Astrocyte of the cerebellum (primary cell): ENCODE measurements at regions of chr20 and their contacts with region 1.

Region 1: DNA sequence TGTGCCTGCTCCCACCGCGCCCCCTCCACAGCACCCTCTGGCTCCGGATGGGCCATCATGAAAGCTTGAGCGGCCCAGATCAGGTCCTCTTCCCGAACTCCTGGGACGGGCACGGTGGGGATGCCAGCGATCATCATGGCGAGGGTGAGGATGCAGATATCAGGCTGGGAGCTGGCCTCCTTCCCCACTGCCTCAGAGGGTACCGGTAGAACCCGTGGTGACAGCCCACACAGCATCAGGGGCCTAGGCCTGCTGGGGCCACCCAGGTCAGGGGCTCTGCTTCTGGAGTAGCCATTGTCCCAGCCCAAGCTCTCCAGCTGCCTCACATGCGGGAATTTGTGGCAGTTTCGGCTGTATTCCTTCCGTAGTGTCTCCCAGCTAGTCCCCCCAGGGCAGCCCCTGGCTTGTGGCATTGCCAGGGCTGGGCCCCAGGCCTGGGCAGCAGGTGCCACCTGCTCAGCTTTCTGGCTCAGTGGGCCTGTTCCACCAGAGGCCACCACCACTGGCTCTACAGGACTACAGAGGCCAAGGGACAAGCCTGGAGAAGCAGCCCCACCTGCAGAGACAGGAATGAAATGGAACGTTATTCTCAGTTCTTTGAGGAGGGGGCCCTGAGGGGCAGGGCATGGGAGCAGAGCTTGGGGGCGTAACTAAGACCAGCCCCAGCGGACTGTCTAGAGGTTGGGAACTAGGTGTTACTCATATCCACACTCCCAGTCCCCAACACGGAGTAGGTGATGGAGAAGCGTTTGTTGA is 654 bp downstream of the SPATA25 start:
- DNase-seq: no peak
- H3K4me3 ChIP-seq: no peak overlapping the region
- CTCF ChIP-seq: no peak

Region 2: GRCh38 chr20:45685896-45686295 is 200.9 kb before region 1 on chr20:
- in situ Hi-C with region 1: no loop called
- DNase-seq: no peak
- H3K4me3 ChIP-seq: no peak overlapping the region
- CTCF ChIP-seq: no peak

Region 3: DNA sequence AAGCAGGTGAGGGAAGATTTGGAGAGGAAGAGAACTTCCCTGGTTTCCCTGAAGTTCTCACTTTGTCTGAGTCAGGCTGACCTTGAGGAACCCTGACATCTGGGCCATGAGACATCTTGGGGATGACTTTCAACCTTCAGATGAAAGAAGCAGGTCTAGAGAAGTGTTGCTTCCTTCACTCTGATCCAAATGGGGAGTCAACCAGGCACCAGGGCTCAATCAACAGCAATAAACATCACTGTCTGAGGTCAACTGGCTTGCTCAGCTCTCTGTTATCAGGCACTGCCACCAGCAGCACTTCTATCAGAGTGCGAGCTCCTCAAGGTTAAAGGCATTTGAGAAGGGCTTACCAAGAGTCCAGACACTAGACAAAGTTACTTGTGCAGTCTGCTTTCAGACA is 35.8 kb before region 1 on chr20:
- in situ Hi-C with region 1: no loop called
- DNase-seq: no peak
- H3K4me3 ChIP-seq: no peak overlapping the region
- CTCF ChIP-seq: no peak

Region 4: DNA sequence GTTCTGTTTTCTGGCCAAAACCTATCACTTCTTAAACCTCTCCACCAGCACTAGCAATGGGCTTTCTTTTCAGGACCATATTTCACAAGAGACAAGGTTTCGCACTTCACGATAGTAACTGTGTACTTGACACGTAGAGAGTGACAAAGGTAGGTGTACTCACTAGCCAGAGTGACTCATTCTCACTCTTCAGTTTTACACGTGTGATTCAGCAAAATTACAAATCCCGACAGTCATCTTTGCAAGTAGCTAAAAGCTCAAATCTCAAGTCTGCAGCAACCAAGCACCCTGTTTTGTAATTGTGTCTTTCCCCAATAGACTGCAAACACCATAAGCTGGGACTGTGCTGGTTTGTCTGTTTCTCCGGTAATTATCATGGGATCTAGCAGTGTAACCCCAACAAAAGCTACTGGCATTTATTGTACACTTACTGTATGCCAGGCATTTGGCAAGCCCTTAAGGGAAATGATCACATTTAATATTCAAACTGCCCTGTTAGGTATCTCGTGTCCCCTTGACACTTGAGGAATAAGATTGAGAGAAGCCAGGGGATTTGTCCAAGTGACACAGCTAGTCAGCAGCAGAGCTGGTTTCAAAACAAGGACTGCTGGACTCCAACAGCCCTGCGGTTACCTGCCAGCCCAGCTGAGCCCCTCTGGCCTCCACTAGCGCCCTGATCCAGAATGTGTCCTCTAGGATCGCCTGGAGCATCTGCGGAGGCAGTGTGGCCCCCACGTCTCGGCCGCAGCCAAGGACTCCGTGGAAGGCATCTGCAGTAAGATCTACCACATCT is 57.6 kb after region 1 on chr20:
- in situ Hi-C with region 1: loop called (anchors 5 kb)
- DNase-seq: no peak
- H3K4me3 ChIP-seq: no peak overlapping the region
- CTCF ChIP-seq: no peak